Gastrocnemius medialis (tissue), 4 donors: ENCODE measurements at regions of chr14 and their contacts with region 1.

Region 1: GRCh38 chr14:22852940-22853767 is 16.8 kb downstream of the MMP14 start:
- DNase-seq: peak; percentile 52 to 80
- ATAC-seq: peak; percentile 60 to 66
- H3K4me3 ChIP-seq: peak overlapping the region; percentile 43 to 56 (median 50)
- H3K27ac ChIP-seq: peak overlapping the region in 1 of 4 donors; percentile 32
- H3K4me1 ChIP-seq: peaks cover 40% of the 10 kb centered on the region in 2 donors
- H3K27me3 ChIP-seq: no peaks in the 10 kb centered on the region
- CTCF ChIP-seq: peak; percentile 90 to 98 (median 94)
- POLR2A ChIP-seq: no peak

Region 2: GRCh38 chr14:22653012-22653621 is 200.0 kb before region 1 on chr14:
- in situ Hi-C with region 1: no loop called
- intact Hi-C with region 1: loop called (anchors 5 kb)
- DNase-seq: peak in 1 of 2 donors; percentile 33
- ATAC-seq: peak; percentile 58 to 70
- H3K4me3 ChIP-seq: no peak overlapping the region
- H3K27ac ChIP-seq: no peak overlapping the region
- H3K4me1 ChIP-seq: peaks cover 0 to 4% of the 10 kb centered on the region in 2 donors
- H3K27me3 ChIP-seq: no peaks in the 10 kb centered on the region
- CTCF ChIP-seq: peak; percentile 50 to 68 (median 65)
- POLR2A ChIP-seq: no peak

Region 3: GRCh38 chr14:22822571-22823098 is 30.5 kb before region 1 on chr14:
- in situ Hi-C with region 1: loop called in 1 of 4 experiments (anchors 5 kb)
- intact Hi-C with region 1: loop called (anchors 1 kb)
- DNase-seq: peak; percentile 27 to 45
- ATAC-seq: peak; percentile 75 to 79
- H3K4me3 ChIP-seq: peak overlapping the region; percentile 43 to 49 (median 46)
- H3K27ac ChIP-seq: no peak overlapping the region
- H3K4me1 ChIP-seq: peaks cover 6 to 11% of the 10 kb centered on the region in 2 donors
- H3K27me3 ChIP-seq: peaks cover 0 to 2% (median 0%) of the 10 kb centered on the region in 3 donors
- CTCF ChIP-seq: peak; percentile 62 to 83 (median 79)
- POLR2A ChIP-seq: no peak

Region 4: DNA sequence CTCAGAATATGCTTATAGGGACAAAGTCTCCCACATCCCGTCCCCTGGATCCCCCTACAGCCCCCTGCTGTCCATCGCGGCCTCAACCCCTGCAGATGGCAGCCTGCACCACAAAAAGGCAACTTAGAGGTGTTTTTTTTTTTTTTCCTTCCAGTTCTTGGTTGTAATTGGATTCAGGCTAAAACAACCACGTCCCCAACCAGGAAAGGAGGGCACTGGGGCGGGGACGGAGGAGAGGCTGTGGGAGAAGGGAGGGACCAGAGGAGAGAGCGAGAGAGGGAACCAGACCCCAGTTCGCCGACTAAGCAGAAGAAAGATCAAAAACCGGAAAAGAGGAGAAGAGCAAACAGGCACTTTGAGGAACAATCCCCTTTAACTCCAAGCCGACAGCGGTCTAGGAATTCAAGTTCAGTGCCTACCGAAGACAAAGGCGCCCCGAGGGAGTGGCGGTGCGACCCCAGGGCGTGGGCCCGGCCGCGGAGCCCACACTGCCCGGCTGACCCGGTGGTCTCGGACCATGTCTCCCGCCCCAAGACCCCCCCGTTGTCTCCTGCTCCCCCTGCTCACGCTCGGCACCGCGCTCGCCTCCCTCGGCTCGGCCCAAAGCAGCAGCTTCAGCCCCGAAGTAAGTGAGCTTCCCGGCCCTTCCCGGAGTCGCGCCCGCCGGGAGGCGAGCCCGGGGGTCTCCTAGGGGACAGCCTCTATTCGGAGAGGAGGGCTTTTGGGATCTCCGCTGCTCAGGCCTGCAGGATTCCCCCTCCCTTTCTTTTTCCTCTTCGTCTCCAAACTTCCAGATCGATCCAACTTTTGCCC is 16.6 kb before region 1 on chr14 and contains the start of gene MMP14:
- in situ Hi-C with region 1: no loop called
- intact Hi-C with region 1: loop called (anchors 1 kb)
- DNase-seq: peak; percentile 67 to 74
- ATAC-seq: peak; percentile 35 to 43
- H3K4me3 ChIP-seq: peak within 1 kb of the TSS; percentile 71 to 78 (median 72)
- H3K27ac ChIP-seq: peak within 1 kb of the TSS; percentile 75 to 84 (median 80)
- H3K4me1 ChIP-seq: peaks cover 0 to 11% of the 10 kb centered on the region in 2 donors
- H3K27me3 ChIP-seq: peaks cover 9 to 12% (median 9%) of the 10 kb centered on the region in 3 donors
- CTCF ChIP-seq: peak in 1 of 5 experiments; percentile 19
- POLR2A ChIP-seq: peak in 1 of 2 donors; percentile 63
- total RNA-seq, gene MMP14: 14.9 to 29.7 (median 20.8) TPM

Region 5: GRCh38 chr14:22945642-22946041 is 92.5 kb after region 1 on chr14:
- in situ Hi-C with region 1: no loop called
- intact Hi-C with region 1: no loop called
- DNase-seq: no peak
- ATAC-seq: no peak
- H3K4me3 ChIP-seq: no peak overlapping the region
- H3K27ac ChIP-seq: no peak overlapping the region
- H3K4me1 ChIP-seq: no peaks in the 10 kb centered on the region
- H3K27me3 ChIP-seq: no peaks in the 10 kb centered on the region
- CTCF ChIP-seq: no peak
- POLR2A ChIP-seq: no peak